Activated T-helper 1 cell treated with anti-CD3 and anti-CD28 coated beads, Interleukin-12 subunit alpha, Interleukin-12 subunit beta, Interleukin-2, Interleukin-4 antibody, amounts not matched to agents 30 ng/mL and 10 ng/mL and 1 ng/mL, durations not matched to agents 14 hours and 24 hours and 36 hours (primary cell): ENCODE measurements at regions of chr19 and their contacts with region 1.

Region 1: DNA sequence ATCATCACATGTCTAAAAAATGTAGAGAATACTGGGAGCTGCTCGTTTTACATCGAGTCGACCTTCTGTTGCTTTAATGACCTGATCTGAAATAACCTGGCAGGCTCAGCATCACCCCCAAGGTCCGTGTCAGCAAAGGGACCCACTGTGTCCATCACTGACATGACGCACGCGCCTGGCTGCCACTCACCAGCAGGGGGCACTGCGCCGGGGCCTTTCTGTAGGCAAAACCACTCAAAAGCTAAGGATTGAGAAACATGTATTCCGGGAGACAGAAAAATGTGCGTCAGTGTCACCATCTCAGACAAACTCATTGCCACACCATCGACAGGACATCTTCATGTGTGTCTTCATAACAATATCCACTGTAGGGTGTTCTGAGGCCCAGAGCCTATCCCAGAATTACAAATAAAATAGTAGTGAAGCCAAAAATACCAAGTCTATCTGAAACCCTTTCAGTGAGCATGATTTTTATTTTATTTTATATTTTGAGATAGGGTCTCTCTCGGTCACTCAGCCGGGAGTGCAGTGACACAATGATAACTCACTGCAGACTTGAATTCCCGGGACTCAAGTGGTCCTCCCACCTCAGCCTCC is 130.3 kb upstream of the LSM14A start:
- DNase-seq: peak; percentile 43
- H3K4me3 Mint-ChIP-seq: no peak overlapping the region
- H3K27ac Mint-ChIP-seq: no peak overlapping the region
- H3K4me1 Mint-ChIP-seq: no peaks in the 10 kb centered on the region
- H3K27me3 Mint-ChIP-seq: no peaks in the 10 kb centered on the region

Region 2: DNA sequence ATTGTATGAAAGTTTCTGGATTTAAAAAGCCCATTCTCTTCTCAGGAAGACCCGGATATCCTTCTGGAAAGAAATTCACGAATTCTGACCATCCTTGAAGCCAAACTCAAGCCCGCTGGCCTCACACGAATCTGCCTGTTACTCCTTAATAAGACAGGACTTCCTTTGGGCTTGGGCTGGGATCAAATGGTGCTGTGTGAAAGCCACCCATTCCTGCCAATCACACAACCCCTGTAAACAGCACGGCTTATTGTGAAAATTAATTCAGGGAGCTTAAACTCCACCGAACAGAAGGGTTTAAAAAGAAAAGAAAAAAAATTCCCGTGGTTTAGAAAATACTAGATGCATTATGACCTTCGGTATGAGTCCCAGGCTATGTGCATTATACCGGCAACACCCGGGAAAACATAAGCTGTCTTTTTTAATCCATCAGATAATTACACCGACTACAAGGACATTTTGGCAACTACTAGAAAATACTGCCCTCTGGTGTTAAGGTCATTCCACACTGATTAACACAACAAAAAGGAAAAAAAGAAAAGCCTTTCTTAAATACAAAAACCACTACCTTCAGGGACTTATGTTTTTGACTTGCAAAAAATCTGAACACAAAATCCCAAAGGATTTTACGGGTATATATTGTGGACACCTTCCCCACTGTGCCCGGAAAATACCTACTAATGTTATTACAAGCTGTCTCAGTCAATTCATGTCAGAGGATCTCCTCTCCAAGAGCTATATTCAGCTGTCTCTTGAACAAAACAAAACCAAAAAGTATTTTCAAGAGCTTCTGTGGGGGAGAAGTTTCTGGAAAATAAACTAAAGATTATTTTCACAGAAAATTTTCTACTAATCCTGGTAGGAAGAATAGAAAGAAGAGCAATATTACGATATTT is 54.2 kb after region 1 on chr19:
- intact Hi-C with region 1: loop called (anchors 1 kb)
- DNase-seq: no peak
- H3K4me3 Mint-ChIP-seq: no peak overlapping the region
- H3K27ac Mint-ChIP-seq: no peak overlapping the region
- H3K4me1 Mint-ChIP-seq: peaks cover 6% of the 10 kb centered on the region
- H3K27me3 Mint-ChIP-seq: peaks cover 12% of the 10 kb centered on the region